Right ventricle myocardium superior (tissue), 1 donor: ENCODE measurements at regions of chr3 and their contacts with region 1.

Region 1: GRCh38 chr3:53709860-53710674 is 136.2 kb downstream of the CHDH start:
- DNase-seq: peak; percentile 85
- ATAC-seq: peak; percentile 68

Region 2: GRCh38 chr3:53303957-53304356 is 406.1 kb before region 1 on chr3:
- intact Hi-C with region 1: loop called (anchors 5 kb)
- DNase-seq: no peak
- ATAC-seq: peak; percentile 51

Region 3: DNA sequence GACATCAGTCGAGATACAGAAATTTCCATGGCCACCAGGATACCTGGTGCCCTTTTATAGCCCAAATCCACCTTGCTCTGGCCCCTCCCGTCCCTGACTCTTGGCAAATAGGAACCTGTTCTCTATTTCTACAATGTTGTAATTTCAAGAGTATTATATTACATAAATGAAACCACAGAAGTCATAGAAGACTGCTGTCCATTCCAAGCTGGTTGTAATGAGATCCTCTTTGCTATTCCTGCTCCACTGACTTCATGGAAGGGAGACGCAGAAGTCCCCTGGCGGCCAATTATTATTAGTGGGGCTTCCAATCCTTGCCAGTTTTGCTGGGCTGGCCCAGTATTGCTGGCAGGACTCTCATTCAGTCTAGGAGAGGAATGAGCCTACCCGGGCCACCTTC is 389.4 kb before region 1 on chr3:
- intact Hi-C with region 1: no loop called
- DNase-seq: no peak
- ATAC-seq: peak; percentile 63

Region 4: GRCh38 chr3:53677413-53677812 is 32.7 kb before region 1 on chr3:
- intact Hi-C with region 1: loop called (anchors 5 kb)
- DNase-seq: no peak
- ATAC-seq: peak; percentile 83

Region 5: DNA sequence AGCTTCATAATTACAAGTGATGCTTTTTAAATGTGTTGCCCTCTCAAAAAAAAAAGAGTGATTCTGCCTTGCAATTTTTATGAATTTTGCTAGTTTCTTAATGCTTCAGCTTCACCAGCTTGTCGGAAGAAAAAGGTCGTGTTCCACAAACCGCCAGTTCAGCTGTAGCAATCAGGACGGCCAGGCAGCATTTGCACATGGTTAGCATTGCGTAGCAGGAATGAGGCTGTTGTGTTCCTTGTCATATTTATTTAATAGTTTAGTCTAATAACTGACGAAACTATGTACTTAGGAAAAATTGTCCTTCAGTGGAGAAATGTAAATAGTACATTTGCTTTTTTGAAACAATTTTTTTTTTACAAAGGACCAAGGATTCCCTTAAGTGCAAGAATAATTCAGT is 246.5 kb after region 1 on chr3:
- intact Hi-C with region 1: no loop called
- DNase-seq: no peak
- ATAC-seq: no peak